MCF 10A (cell line): ENCODE measurements at regions of chr10 and their contacts with region 1.

Region 1: DNA sequence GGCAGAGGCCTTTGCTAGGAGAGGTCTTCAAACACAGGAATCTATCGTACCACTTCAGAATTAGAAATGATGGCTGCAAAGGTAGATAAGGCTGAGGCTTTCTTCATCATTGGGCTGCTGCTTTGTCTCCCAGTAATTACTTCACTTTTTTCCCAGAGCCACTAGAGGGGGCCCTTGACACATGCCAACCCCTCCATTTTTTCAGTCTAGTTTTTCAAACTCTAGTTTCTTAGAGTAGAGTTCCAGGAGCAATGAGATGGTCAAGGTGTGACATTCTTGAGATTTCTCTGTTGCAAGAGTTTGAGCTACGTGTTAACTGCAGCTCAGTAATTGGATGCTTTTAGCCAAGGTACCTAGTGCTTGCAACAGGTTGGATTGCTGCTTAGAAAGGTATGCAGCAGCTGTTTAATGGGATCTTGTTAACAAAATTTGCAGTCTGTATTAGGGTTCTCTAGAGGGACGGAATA is 33.8 kb upstream of the RBM20 start:
- DNase-seq: peak; percentile 78
- H3K4me3 Mint-ChIP-seq: no peak overlapping the region
- H3K27ac Mint-ChIP-seq: no peak overlapping the region
- H3K4me1 Mint-ChIP-seq: no peaks in the 10 kb centered on the region
- H3K27me3 Mint-ChIP-seq: no peaks in the 10 kb centered on the region
- CTCF ChIP-seq: peak; percentile 62

Region 2: DNA sequence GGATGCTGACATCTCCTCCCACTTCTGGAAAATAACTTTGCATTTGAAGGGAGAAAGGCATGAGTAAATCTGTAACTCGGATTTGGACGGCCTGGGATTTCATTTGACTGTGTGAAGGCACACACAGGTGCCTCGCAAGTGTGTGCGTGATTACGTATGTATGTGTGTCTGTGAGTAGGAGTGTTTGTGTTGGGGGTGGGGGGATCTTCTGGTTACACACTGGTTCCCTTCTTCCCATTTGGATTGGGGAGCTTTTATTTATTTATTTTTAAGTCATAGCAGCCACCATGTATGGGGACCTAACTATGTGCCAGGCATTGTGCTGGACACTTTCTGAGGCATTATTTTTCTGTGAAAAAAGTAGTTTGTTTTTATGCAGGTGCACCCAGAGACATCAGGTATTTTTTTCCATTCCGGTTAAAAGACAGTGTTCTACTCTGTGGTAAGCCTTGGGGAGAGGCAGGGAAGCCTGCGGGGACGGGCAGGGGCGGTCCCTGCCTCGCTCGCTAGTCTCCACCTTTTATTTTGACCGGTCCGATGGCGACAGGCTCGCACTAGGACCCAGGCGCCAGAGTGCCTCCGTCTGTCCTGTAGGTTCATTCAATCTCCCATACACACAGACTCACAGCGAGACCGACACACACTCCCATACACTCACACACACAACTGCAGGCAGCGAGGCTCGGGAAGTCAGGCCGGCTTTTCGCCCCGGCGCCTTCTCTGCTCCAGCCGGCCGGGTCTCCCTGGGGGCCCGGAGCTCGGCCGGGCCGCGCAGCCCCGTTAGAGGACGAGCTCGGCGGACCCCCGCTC is 403.1 kb before region 1 on chr10 and contains the start of gene MXI1:
- CTCF ChIA-PET with region 1: no interaction called
- POLR2A ChIA-PET with region 1: no interaction called
- intact Hi-C with region 1: no loop called
- DNase-seq: peak; percentile 86
- H3K4me3 Mint-ChIP-seq: peak within 1 kb of the TSS; percentile 84
- H3K27ac Mint-ChIP-seq: peak within 1 kb of the TSS; percentile 82
- H3K4me1 Mint-ChIP-seq: peaks cover 18% of the 10 kb centered on the region
- H3K27me3 Mint-ChIP-seq: no peaks in the 10 kb centered on the region
- CTCF ChIP-seq: no peak
- total RNA-seq, gene MXI1: 16.9 and 19.5 TPM in 2 replicates

Region 3: GRCh38 chr10:110311357-110311949 is 298.9 kb before region 1 on chr10:
- CTCF ChIA-PET with region 1: interaction called, 11 read pairs
- POLR2A ChIA-PET with region 1: interaction called, 4 read pairs
- intact Hi-C with region 1: no loop called
- DNase-seq: peak; percentile 77
- H3K4me3 Mint-ChIP-seq: no peak overlapping the region
- H3K27ac Mint-ChIP-seq: no peak overlapping the region
- H3K4me1 Mint-ChIP-seq: no peaks in the 10 kb centered on the region
- H3K27me3 Mint-ChIP-seq: no peaks in the 10 kb centered on the region
- CTCF ChIP-seq: peak; percentile 69

Region 4: GRCh38 chr10:110629680-110630191 is 19.4 kb after region 1 on chr10:
- CTCF ChIA-PET with region 1: interaction called, 20 read pairs
- POLR2A ChIA-PET with region 1: interaction called, 3 read pairs
- intact Hi-C with region 1: no loop called
- DNase-seq: peak; percentile 86
- H3K4me3 Mint-ChIP-seq: no peak overlapping the region
- H3K27ac Mint-ChIP-seq: no peak overlapping the region
- H3K4me1 Mint-ChIP-seq: peaks cover 31% of the 10 kb centered on the region
- H3K27me3 Mint-ChIP-seq: no peaks in the 10 kb centered on the region
- CTCF ChIP-seq: no peak

Region 5: GRCh38 chr10:110671788-110672579 is 61.6 kb after region 1 on chr10:
- CTCF ChIA-PET with region 1: interaction called, 33 read pairs
- POLR2A ChIA-PET with region 1: interaction called, 17 read pairs
- intact Hi-C with region 1: loop called (anchors 2 kb)
- DNase-seq: peak; percentile 76
- H3K4me3 Mint-ChIP-seq: peak overlapping the region; percentile 75
- H3K27ac Mint-ChIP-seq: peak overlapping the region; percentile 80
- H3K4me1 Mint-ChIP-seq: no peaks in the 10 kb centered on the region
- H3K27me3 Mint-ChIP-seq: no peaks in the 10 kb centered on the region
- CTCF ChIP-seq: peak; percentile 75

Region 6: GRCh38 chr10:110681023-110681681 is 70.8 kb after region 1 on chr10:
- CTCF ChIA-PET with region 1: interaction called, 4 read pairs
- POLR2A ChIA-PET with region 1: no interaction called
- intact Hi-C with region 1: loop called (anchors 2 kb)
- DNase-seq: peak; percentile 46
- H3K4me3 Mint-ChIP-seq: no peak overlapping the region
- H3K27ac Mint-ChIP-seq: no peak overlapping the region
- H3K4me1 Mint-ChIP-seq: peaks cover 7% of the 10 kb centered on the region
- H3K27me3 Mint-ChIP-seq: no peaks in the 10 kb centered on the region
- CTCF ChIP-seq: no peak

Region 7: GRCh38 chr10:110893559-110894179 is 283.3 kb after region 1 on chr10:
- CTCF ChIA-PET with region 1: interaction called, 6 read pairs
- POLR2A ChIA-PET with region 1: interaction called, 5 read pairs
- intact Hi-C with region 1: loop called (anchors 5 kb)
- DNase-seq: peak; percentile 54
- H3K4me3 Mint-ChIP-seq: no peak overlapping the region
- H3K27ac Mint-ChIP-seq: no peak overlapping the region
- H3K4me1 Mint-ChIP-seq: peaks cover 16% of the 10 kb centered on the region
- H3K27me3 Mint-ChIP-seq: no peaks in the 10 kb centered on the region
- CTCF ChIP-seq: peak; percentile 52

Region 8: GRCh38 chr10:111360260-111360925 is 750.1 kb after region 1 on chr10:
- CTCF ChIA-PET with region 1: no interaction called
- POLR2A ChIA-PET with region 1: no interaction called
- intact Hi-C with region 1: loop called (anchors 1 kb)
- DNase-seq: peak; percentile 63
- H3K4me3 Mint-ChIP-seq: no peak overlapping the region
- H3K27ac Mint-ChIP-seq: no peak overlapping the region
- H3K4me1 Mint-ChIP-seq: no peaks in the 10 kb centered on the region
- H3K27me3 Mint-ChIP-seq: peaks cover 61% of the 10 kb centered on the region
- CTCF ChIP-seq: peak; percentile 66